MCF 10A (cell line): ENCODE measurements at regions of chr16 and their contacts with region 1.

Region 1: DNA sequence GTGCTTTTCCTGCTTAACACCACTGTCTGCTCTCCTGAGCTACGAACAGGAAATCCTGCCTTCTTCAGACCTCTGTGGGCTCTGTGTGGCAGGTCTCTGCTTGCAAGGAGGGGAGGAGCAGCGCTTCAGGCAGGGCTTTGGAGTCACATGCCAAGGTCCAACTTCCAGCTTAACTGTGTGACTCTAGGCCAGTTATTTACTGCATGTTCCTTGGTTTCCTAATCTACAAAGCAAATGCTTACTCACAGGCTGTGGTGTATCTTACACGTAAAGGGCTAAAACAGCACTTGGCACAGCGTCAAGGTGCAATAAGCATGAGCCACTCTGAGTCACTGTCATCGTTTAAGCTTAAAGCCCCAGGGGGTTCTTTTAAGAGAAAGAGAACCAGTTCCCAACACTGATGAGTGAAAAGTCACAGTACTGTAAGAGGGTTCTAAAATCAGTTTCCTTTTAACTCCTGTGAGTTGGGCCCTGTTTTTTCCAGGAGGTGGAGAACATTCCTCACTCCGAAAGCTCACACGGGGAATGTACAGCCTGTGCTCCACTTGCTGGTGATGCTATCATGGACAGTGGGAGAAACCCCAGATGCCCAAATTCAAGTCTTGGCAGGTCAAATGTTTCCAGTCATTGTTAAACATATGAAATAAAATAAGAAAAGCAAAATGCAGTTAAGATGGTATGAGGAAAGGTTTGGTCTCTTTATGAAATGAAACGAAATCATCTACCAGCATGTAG is 54.1 kb upstream of the BCAR1 start:
- DNase-seq: peak; percentile 100
- H3K4me3 Mint-ChIP-seq: peak overlapping the region; percentile 65
- H3K27ac Mint-ChIP-seq: peak overlapping the region; percentile 99
- H3K4me1 Mint-ChIP-seq: peaks cover 45% of the 10 kb centered on the region
- H3K27me3 Mint-ChIP-seq: no peaks in the 10 kb centered on the region
- CTCF ChIP-seq: no peak

Region 2: DNA sequence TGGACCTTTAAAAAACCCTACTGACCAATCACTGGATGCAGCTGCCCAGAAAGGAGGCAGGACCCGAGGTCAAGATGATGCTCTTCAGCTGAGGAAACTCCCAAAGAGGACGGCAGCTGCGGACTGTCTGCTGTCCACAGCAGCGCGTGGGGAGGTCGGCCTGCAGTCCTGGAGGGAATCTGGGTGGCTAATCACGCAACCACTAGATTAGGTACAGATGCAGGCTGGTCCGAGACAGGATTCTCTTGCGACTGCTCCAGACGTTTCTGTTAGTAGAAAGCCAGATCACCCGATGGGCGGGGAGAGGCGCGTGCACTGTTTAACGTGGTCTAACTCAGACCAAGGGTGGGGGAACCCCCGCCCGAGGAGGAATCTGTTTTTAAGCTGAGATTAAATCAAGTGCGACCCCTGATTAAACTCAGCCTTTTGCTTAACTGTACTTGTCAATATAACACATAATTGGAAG is 107.4 kb before region 1 on chr16:
- CTCF ChIA-PET with region 1: interaction called, 10 read pairs
- POLR2A ChIA-PET with region 1: no interaction called
- intact Hi-C with region 1: no loop called
- DNase-seq: no peak
- H3K4me3 Mint-ChIP-seq: no peak overlapping the region
- H3K27ac Mint-ChIP-seq: no peak overlapping the region
- H3K4me1 Mint-ChIP-seq: no peaks in the 10 kb centered on the region
- H3K27me3 Mint-ChIP-seq: peaks cover 23% of the 10 kb centered on the region
- CTCF ChIP-seq: no peak

Region 3: DNA sequence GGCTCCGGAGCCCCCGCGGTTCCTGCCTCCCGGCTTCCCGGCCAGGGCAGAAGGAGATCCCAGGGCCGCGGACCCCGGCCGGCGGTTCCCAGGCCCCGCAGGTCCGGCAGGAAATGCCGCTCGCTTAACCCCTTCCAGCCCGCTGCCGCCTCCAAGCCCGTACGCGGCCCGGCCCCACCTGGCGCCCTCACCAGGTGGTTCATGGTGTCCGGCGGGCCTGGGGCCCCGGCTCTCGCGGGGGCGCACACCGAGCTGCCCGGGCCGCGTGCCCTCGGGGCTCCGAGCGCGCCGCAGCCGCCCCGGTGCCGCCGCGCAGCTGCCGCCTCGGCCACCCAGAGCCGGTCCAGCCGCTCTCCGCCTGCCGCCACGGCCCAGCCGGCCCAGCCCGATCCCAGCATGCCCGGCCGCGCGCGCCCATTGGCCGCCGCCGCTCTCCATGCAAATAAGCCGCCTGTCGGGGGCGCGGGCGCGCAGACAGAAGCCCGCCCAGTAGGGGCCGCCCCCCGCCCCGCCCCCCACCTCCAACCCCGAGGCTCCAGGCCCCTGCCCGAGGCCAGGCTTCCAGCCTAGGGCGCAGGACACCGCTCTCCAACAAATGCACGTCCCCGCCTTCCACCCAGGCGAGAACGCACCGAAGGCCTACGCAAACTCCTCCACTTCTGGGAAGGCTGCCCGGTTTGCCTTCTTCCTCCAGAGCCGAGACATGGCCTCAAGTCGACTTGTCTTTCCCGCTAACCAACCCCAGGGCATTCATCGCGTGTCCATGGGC is 54.1 kb before region 1 on chr16 and contains the start of gene BCAR1:
- CTCF ChIA-PET with region 1: interaction called, 10 read pairs
- POLR2A ChIA-PET with region 1: interaction called, 106 read pairs
- intact Hi-C with region 1: loop called (anchors 1 kb)
- DNase-seq: peak; percentile 81
- H3K4me3 Mint-ChIP-seq: peak within 1 kb of the TSS; percentile 75
- H3K27ac Mint-ChIP-seq: peak within 1 kb of the TSS; percentile 82
- H3K4me1 Mint-ChIP-seq: peaks cover 32% of the 10 kb centered on the region
- H3K27me3 Mint-ChIP-seq: no peaks in the 10 kb centered on the region
- CTCF ChIP-seq: no peak
- total RNA-seq, gene BCAR1: 58.6 and 68.1 TPM in 2 replicates

Region 4: DNA sequence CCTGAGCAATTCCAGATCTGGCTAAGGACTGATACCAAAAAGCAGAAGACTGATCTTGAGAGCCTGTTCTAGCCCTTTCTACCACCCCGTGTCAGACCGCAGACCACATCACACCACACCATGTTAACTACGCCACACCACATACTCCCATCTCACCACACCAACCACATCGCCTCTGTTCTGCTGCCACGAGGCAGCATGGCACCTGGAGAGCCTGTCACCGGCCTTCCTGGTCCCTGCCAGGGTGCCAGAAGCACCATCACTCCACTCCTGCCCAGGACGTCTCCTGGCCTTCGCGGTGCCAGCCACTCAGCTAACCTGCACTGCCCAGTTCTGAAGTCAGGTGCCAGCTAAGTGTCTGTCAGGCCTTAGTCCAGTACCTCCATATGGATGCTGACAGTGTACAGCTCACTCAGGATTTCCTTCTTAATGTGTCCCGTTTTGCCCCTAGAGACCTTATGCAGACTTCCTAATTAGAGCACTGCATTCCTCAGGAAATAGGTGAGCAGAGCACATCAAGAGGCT is 16.9 kb before region 1 on chr16:
- CTCF ChIA-PET with region 1: interaction called, 5 read pairs
- POLR2A ChIA-PET with region 1: interaction called, 30 read pairs
- intact Hi-C with region 1: no loop called
- DNase-seq: no peak
- H3K4me3 Mint-ChIP-seq: peak overlapping the region; percentile 54
- H3K27ac Mint-ChIP-seq: peak overlapping the region; percentile 37
- H3K4me1 Mint-ChIP-seq: peaks cover 18% of the 10 kb centered on the region
- H3K27me3 Mint-ChIP-seq: no peaks in the 10 kb centered on the region
- CTCF ChIP-seq: no peak

Region 5: GRCh38 chr16:75336521-75336920 is 31.0 kb after region 1 on chr16:
- CTCF ChIA-PET with region 1: interaction called, 8 read pairs
- POLR2A ChIA-PET with region 1: interaction called, 65 read pairs
- intact Hi-C with region 1: no loop called
- DNase-seq: no peak
- H3K4me3 Mint-ChIP-seq: no peak overlapping the region
- H3K27ac Mint-ChIP-seq: no peak overlapping the region
- H3K4me1 Mint-ChIP-seq: peaks cover 7% of the 10 kb centered on the region
- H3K27me3 Mint-ChIP-seq: no peaks in the 10 kb centered on the region
- CTCF ChIP-seq: no peak

Region 6: GRCh38 chr16:75379911-75380847 is 74.6 kb after region 1 on chr16:
- CTCF ChIA-PET with region 1: interaction called, 29 read pairs
- POLR2A ChIA-PET with region 1: interaction called, 103 read pairs
- intact Hi-C with region 1: loop called (anchors 1 kb)
- DNase-seq: no peak
- H3K4me3 Mint-ChIP-seq: no peak overlapping the region
- H3K27ac Mint-ChIP-seq: peak overlapping the region; percentile 19
- H3K4me1 Mint-ChIP-seq: peaks cover 38% of the 10 kb centered on the region
- H3K27me3 Mint-ChIP-seq: no peaks in the 10 kb centered on the region
- CTCF ChIP-seq: no peak

Region 7: GRCh38 chr16:75432828-75433731 is 127.5 kb after region 1 on chr16 and contains the start of gene CFDP1:
- CTCF ChIA-PET with region 1: no interaction called
- POLR2A ChIA-PET with region 1: interaction called, 19 read pairs
- intact Hi-C with region 1: no loop called
- DNase-seq: peak; percentile 95
- H3K4me3 Mint-ChIP-seq: peak within 1 kb of the TSS; percentile 77
- H3K27ac Mint-ChIP-seq: peak within 1 kb of the TSS; percentile 86
- H3K4me1 Mint-ChIP-seq: peaks cover 13% of the 10 kb centered on the region
- H3K27me3 Mint-ChIP-seq: no peaks in the 10 kb centered on the region
- CTCF ChIP-seq: no peak
- total RNA-seq, gene CFDP1: 41.3 and 44.7 TPM in 2 replicates